ENCODE measurements at regions of chr5 and their contacts with region 1.

Region 1: GRCh38 chr5:157130925-157131324 is 11.7 kb downstream of the MED7 start:
- DNase-seq: no peak
- H3K4me3 Mint-ChIP-seq: no peak overlapping the region
- H3K27ac Mint-ChIP-seq: no peak overlapping the region
- H3K4me1 Mint-ChIP-seq: peaks cover 38% of the 10 kb centered on the region
- H3K27me3 Mint-ChIP-seq: no peaks in the 10 kb centered on the region

Region 2: GRCh38 chr5:155943516-155944407 is 1187.2 kb before region 1 on chr5:
- CTCF ChIA-PET with region 1: interaction called, 8 read pairs
- intact Hi-C with region 1: loop called (anchors 5 kb)
- DNase-seq: peak; percentile 62
- H3K4me3 Mint-ChIP-seq: no peak overlapping the region
- H3K27ac Mint-ChIP-seq: no peak overlapping the region
- H3K4me1 Mint-ChIP-seq: no peaks in the 10 kb centered on the region
- H3K27me3 Mint-ChIP-seq: peaks cover 10% of the 10 kb centered on the region

Region 3: DNA sequence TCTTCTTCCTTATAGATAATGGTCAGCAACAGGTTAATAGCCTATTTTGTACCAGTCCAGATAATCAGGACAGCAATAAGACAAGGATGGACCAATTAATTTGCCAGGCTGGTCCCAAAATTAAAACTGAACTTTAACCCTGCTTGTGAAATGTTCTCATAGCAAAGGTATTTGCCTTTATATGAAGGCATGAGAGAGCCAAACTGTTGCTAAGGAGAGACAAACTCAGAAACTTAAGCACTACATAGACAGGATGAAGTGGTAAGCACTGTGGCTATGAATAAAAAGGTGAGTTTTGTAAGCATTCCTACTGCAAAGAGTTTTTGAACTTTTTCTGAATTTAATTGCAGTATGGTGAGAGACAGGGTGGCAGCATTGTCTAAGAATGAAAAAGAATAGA is 455.5 kb before region 1 on chr5:
- CTCF ChIA-PET with region 1: no interaction called
- intact Hi-C with region 1: loop called (anchors 10 kb)
- DNase-seq: no peak
- H3K4me3 Mint-ChIP-seq: no peak overlapping the region
- H3K27ac Mint-ChIP-seq: no peak overlapping the region
- H3K4me1 Mint-ChIP-seq: no peaks in the 10 kb centered on the region
- H3K27me3 Mint-ChIP-seq: no peaks in the 10 kb centered on the region

Region 4: GRCh38 chr5:156835905-156836304 is 295.0 kb before region 1 on chr5:
- CTCF ChIA-PET with region 1: no interaction called
- intact Hi-C with region 1: loop called (anchors 2 kb)
- DNase-seq: peak; percentile 6
- H3K4me3 Mint-ChIP-seq: no peak overlapping the region
- H3K27ac Mint-ChIP-seq: no peak overlapping the region
- H3K4me1 Mint-ChIP-seq: peaks cover 4% of the 10 kb centered on the region
- H3K27me3 Mint-ChIP-seq: no peaks in the 10 kb centered on the region

Region 5: GRCh38 chr5:156934450-156935211 is 196.3 kb before region 1 on chr5:
- CTCF ChIA-PET with region 1: interaction called, 4 read pairs
- intact Hi-C with region 1: loop called (anchors 1 kb)
- DNase-seq: peak; percentile 88
- H3K4me3 Mint-ChIP-seq: peak overlapping the region; percentile 22
- H3K27ac Mint-ChIP-seq: peak overlapping the region; percentile 92
- H3K4me1 Mint-ChIP-seq: peaks cover 47% of the 10 kb centered on the region
- H3K27me3 Mint-ChIP-seq: no peaks in the 10 kb centered on the region

Region 6: DNA sequence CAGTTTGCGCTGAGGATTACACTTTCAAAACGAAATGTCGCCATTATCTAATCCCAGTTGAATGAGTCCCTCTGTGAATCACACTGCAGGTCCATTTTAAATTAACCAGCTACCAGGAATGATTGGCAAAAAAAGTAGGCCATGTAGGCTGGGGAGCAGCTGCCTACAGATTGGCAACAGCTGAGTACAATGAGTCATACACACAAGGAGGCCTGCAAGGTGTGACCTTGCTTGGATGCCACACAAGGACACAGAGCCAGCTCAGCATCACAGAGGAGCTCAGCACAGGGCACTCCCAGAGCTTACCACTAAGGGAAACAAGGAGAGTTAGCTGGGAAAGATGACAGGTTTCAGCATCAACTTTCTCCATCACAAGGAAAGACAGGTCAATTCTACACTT is 84.9 kb before region 1 on chr5:
- CTCF ChIA-PET with region 1: interaction called, 11 read pairs
- intact Hi-C with region 1: loop called (anchors 5 kb)
- DNase-seq: peak; percentile 64
- H3K4me3 Mint-ChIP-seq: no peak overlapping the region
- H3K27ac Mint-ChIP-seq: peak overlapping the region; percentile 34
- H3K4me1 Mint-ChIP-seq: peaks cover 65% of the 10 kb centered on the region
- H3K27me3 Mint-ChIP-seq: no peaks in the 10 kb centered on the region